Lower leg skin (tissue), 4 donors: ENCODE measurements at regions of chr6 and their contacts with region 1.

Region 1: DNA sequence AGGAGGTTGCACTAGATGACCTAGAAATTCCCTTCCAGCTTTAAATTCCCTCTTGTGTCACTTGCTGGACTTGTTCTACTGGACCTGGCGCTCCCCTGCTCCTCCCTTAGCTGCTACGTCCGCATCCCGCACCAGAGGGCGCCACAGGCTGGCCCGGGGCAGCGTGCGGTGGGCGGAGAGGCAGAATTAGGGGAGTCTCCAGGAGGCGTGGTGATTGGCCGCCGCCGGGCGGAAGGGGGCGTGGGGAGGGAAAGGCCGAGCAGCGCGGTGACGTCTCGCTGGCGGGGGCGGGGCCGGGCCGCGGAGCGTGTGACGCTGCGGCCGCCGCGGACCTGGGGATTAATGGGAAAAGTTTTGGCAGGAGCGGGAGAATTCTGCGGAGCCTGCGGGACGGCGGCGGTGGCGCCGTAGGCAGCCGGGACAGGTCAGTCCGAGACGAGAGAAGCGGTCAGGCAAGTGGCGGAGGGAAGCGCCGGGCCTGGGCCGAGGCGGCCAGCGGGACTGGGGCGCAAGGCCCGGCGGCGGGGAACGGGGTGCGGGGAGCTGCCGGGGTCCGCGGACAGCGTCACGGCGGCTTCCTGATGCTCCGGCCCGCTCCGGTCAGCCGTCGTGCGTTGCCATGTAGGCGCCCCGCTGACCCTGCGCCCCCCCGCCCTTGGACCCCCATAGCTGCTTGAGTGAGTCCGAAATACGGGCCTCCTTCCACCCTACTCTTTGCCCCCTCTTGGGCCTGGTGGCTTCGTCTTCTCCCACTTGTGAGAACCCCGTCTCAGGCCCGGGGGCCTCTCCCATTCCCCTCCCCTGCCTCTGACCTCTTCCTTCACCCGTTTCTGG is at the start of gene PPARD:
- DNase-seq: peak; percentile 97 to 100
- H3K4me3 ChIP-seq: peak within 1 kb of the TSS; percentile 51
- CTCF ChIP-seq: peak in 2 of 3 donors; percentile 56 to 96
- POLR2A ChIP-seq: no peak
- total RNA-seq, gene PPARD: 22.6 to 33.8 (median 27.1) TPM

Region 2: GRCh38 chr6:33860706-33861474 is 1481.6 kb before region 1 on chr6:
- intact Hi-C with region 1: no loop called
- DNase-seq: no peak
- H3K4me3 ChIP-seq: no peak overlapping the region
- CTCF ChIP-seq: no peak
- POLR2A ChIP-seq: no peak

Region 3: DNA sequence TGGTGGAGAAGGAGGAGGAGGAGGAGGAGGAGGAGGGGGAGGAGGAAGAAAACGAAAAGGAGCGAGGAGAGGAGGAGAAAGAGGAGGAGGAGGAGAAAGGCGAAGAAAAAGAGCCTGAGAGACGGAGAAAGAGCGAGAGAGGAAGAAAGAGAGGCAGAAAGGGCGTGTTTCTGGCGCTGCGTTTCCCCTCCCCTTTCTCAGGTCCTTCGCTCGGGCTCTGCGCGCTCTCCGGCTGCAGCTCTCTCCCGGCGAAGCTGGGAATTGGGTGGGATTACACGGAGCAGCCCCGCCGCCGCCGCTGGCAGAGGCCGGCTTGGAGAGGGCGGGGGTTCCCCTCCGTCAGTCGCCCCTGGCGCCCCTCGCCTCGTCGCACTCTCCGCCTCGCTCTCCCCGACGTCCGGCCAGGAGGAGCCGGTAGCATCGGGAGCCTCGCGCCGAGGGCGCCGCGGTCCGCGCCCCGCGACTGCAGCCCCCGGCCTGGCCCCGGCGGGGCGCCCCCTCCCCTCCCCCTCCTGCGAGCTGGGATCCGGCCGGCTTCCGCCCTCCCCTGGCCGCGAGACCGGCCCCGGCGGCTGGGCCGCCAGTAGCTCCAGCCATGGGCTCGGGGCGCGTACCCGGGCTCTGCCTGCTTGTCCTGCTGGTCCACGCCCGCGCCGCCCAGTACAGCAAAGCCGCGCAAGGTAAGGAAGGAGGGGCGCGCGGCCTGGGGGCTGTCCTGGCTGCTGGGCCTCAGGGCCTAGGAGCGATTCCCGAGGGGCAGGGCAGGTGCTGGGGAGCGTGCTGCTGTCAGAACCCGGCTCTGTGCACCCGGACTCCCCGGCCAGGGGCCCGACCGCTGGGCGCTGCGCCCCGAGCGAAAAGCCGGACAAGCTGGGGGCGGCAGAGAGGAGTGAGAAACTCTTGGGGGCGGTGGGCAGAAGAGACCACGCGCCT is 128.4 kb before region 1 on chr6 and contains the start of gene SCUBE3:
- intact Hi-C with region 1: no loop called
- DNase-seq: no peak
- H3K4me3 ChIP-seq: peak within 1 kb of the TSS; percentile 16
- CTCF ChIP-seq: no peak
- POLR2A ChIP-seq: no peak
- total RNA-seq, gene SCUBE3: 0.13 to 0.91 (median 0.39) TPM in 3 of 4 donors, not detected in the other

Region 4: DNA sequence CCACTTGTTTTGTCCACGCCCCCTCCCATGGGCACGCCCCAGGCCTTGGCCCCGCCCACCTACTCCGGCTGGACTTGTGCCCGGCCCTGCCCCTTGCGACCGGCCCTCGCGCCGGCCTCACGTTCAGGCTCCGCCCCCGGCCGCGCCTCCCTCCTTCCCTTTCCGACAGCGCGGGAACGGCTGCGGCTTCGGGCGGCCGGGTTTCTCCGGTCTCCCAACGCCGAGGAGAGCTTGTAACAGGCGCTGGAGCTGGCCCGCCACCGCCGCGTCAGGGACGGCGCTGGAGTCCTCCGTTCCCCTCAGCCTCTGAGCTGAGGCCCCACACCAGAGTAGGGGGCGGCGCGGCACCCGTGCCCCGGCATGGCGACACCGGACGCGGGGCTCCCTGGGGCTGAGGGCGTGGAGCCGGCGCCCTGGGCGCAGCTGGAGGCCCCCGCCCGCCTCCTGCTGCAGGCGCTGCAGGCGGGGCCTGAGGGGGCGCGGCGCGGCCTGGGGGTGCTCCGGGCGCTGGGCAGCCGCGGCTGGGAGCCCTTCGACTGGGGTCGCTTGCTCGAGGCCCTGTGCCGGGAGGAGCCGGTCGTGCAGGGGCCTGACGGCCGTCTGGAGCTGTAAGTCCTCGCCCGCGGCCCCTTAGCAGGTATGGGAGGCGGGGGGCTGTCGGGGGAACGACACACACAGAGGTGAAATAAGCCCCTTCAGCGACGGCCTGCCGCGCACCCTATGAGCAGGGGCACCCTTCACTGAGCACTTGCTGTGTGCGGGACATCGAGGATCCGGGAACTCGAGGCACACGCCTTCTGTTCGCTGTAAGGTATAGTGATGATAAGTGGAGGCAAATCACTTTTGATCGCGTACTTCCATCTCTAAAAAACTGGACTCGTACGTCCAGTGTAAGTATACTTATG is 110.0 kb after region 1 on chr6 and contains the start of gene FANCE:
- intact Hi-C with region 1: loop called (anchors 2 kb)
- DNase-seq: peak; percentile 94 to 100
- H3K4me3 ChIP-seq: peak within 1 kb of the TSS; percentile 56
- CTCF ChIP-seq: no peak
- POLR2A ChIP-seq: no peak
- total RNA-seq, gene FANCE: 17.5 to 36.7 (median 34.2) TPM

Region 5: GRCh38 chr6:35468181-35468979 is 125.9 kb after region 1 on chr6 and contains the start of gene RPL10A:
- intact Hi-C with region 1: loop called (anchors 5 kb)
- DNase-seq: peak; percentile 96 to 99
- H3K4me3 ChIP-seq: peak within 1 kb of the TSS; percentile 90
- CTCF ChIP-seq: peak in 1 of 3 donors; percentile 80
- POLR2A ChIP-seq: peak in 1 of 2 donors; percentile 70
- total RNA-seq, gene RPL10A: 1,714 to 2,467 (median 2,118) TPM

Region 6: DNA sequence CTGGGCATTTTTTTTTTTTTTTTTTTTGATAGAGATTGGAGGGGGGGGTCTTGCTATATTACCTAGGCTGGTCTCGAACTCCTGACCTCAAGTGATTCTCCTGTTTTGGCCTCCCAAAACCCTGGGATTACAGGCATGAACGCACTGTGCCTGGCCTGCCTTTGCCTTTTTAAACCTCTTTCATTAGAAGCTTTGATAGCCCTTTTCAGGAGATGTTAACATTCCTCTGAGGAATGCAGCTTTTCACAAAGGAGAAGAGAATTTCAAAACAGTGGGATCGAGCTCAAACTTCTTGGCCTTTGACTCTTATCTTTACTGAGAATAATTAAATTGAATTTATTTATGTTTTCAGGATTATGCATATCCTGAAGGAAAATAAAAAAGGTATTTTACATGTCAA is 650.7 kb after region 1 on chr6:
- intact Hi-C with region 1: no loop called
- DNase-seq: no peak
- H3K4me3 ChIP-seq: no peak overlapping the region
- CTCF ChIP-seq: no peak
- POLR2A ChIP-seq: no peak